Breast epithelium (tissue), 4 donors: ENCODE measurements at regions of chr11 and their contacts with region 1.

Region 1: GRCh38 chr11:11787305-11788062 is 54.3 kb upstream of the USP47 start:
- DNase-seq: peak; percentile 43 to 75
- H3K4me3 ChIP-seq: no peak overlapping the region
- H3K27ac ChIP-seq: no peak overlapping the region
- H3K4me1 ChIP-seq: no peaks in the 10 kb centered on the region
- H3K27me3 ChIP-seq: no peaks in the 10 kb centered on the region
- CTCF ChIP-seq: peak; percentile 81 to 96 (median 92)
- POLR2A ChIP-seq: no peak

Region 2: DNA sequence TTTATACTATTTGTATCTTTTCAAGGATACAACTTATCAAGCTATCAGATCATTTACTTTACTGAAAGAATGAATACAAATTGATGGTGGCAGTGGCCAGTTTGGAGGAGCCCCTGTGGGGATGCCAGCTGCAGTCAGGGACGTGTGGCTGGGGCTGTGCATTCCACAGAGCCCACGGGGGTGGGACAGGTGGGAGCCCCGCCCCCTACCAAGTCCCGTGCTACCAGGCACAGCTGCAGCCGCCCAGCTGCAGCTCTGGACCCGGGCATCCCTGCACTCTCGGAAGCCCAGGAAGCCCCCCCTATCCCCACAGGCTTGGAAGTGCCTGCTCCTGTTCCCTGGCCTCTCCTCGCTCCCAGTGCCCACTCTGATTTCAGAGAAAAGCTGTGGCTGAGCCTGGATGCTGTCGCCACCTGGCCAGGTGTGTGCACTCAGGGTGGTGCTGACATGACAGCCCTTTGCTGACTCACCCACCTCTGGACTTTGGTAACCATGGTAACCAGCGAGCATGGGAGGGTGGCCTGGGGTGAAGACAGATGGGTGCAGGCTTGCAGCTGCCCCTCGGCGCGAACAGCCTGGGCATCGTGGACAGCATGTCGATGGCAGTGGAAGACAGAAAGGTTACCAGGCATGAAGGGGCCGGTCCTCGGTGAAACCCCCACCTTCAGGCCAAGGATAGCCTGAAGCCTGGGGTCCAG is 1631.5 kb before region 1 on chr11:
- intact Hi-C with region 1: loop called (anchors 5 kb)
- DNase-seq: no peak
- H3K4me3 ChIP-seq: no peak overlapping the region
- H3K27ac ChIP-seq: no peak overlapping the region
- H3K4me1 ChIP-seq: no peaks in the 10 kb centered on the region
- H3K27me3 ChIP-seq: no peaks in the 10 kb centered on the region
- CTCF ChIP-seq: no peak
- POLR2A ChIP-seq: no peak

Region 3: DNA sequence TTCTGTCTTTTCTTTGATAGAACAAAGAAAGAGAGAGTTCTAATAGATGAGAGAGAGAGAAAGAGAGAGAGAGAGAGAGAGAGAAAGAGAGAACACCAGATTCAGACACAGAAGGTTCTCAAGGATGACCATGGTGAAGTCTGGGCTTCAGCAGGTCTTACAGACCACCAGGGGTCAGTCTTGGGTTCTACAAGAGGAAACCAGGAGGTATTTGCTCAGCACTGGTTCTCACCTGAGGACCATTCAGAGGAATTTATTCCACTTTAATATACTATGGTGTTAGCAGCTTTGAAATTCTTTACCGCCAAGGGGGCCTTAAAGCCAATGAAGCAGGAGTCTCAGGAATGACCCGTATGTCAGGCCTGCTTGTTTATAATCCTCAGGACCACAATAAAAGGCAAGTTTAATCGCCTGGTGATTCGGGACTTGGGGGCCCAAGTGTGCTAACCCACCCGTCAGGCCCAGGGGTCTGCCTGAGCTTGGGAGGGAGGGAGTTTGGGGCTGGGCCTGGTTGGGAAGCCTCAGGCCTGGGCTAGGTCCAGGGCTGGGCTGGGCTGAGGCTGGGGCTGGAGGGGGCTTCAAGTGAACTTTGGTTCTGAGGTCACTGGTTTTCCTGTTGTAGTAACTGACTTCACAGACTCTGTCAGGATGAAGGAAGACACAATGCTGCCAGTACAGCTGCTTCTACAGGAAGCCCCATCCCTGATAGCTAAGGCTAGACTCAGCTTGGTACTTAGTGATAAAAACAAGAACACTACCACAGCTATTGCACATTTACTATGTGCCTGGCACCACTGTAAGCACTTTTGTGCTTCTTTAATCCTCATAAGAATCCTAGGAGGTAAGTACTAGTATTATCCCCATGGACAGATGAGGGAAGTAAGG is 750.4 kb before region 1 on chr11:
- intact Hi-C with region 1: loop called (anchors 5 kb)
- DNase-seq: no peak
- H3K4me3 ChIP-seq: no peak overlapping the region
- H3K27ac ChIP-seq: no peak overlapping the region
- H3K4me1 ChIP-seq: no peaks in the 10 kb centered on the region
- H3K27me3 ChIP-seq: no peaks in the 10 kb centered on the region
- CTCF ChIP-seq: peak; percentile 26 to 76 (median 63)
- POLR2A ChIP-seq: no peak